Naive thymus-derived CD4-positive, alpha-beta T cell (primary cell): ENCODE measurements at regions of chr7 and their contacts with region 1.

Region 1: GRCh38 chr7:25389489-25390106 is 161.3 kb upstream of the NPVF start:
- DNase-seq: peak in 7 of 9 donors; percentile 32 to 67 (median 51)
- ATAC-seq: peak; percentile 61
- H3K4me3 ChIP-seq: no peak overlapping the region
- H3K4me3 Mint-ChIP-seq: no peak overlapping the region
- H3K27ac ChIP-seq: no peak overlapping the region
- H3K27ac Mint-ChIP-seq: peak overlapping the region in 2 of 9 donors; percentile 41 to 75
- H3K4me1 ChIP-seq: no peaks in the 10 kb centered on the region
- H3K4me1 Mint-ChIP-seq: peaks cover 0 to 9% (median 0%) of the 10 kb centered on the region in 7 donors
- H3K27me3 ChIP-seq: no peaks in the 10 kb centered on the region
- H3K27me3 Mint-ChIP-seq: peaks cover 0 to 22% (median 6%) of the 10 kb centered on the region in 5 donors

Region 2: DNA sequence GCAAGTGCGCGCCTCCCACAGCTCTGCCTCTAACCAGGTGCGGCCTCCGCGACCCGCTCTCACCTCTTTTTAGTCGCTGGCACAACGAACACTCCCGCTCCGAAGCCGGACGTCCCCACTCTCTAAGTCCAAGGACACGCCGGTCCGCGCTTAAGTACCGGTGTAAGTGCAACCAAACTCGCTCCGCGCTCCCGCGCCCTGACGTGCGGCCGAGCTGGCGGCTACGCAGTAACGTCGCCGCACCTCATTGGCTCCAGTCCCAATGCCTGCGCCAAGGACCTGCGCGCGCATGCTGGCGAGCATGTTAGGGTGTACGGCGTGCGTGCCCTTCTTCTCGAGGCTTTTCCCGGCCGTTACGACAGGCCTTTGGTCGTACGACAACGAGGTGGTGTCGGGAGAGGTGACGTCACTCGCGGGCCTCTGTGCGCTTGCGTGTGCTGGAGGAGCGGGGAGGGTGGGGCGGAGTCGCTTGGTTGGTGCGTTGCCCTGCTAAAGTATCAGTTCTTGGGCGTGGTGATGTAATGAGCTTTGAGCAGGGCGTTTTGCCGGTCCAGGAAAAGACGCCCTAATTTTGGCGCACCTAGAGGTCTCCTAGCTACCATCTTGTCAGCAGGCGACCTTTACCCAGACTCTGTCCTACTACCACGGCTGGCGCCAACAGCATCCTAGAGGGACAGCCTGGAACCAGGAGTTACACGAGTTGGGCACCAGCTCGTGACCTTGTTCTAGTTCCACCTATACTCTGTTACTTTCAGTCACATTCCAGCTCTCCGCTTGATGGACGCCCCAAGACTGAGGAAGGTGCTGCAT is 264.3 kb before region 1 on chr7 and contains the start of gene CYCS:
- CTCF ChIA-PET with region 1: no interaction called
- POLR2A ChIA-PET with region 1: no interaction called
- intact Hi-C with region 1: no loop called
- DNase-seq: peak; percentile 97 to 100 (median 99)
- ATAC-seq: peak; percentile 96
- H3K4me3 ChIP-seq: peak within 1 kb of the TSS; percentile 74
- H3K4me3 Mint-ChIP-seq: peak within 1 kb of the TSS; percentile 88 to 100 (median 100)
- H3K27ac ChIP-seq: peak within 1 kb of the TSS; percentile 93
- H3K27ac Mint-ChIP-seq: peak within 1 kb of the TSS; percentile 98 to 100 (median 100)
- H3K4me1 ChIP-seq: peaks cover 7 to 13% of the 10 kb centered on the region in 2 donors
- H3K4me1 Mint-ChIP-seq: peaks cover 15 to 40% (median 23%) of the 10 kb centered on the region in 7 donors
- H3K27me3 ChIP-seq: no peaks in the 10 kb centered on the region
- H3K27me3 Mint-ChIP-seq: peaks cover 0 to 5% (median 0%) of the 10 kb centered on the region in 5 donors
- total RNA-seq, gene CYCS: 40.4 to 130 (median 114) TPM

Region 3: GRCh38 chr7:25179771-25180591 is 209.6 kb before region 1 on chr7:
- CTCF ChIA-PET with region 1: no interaction called
- POLR2A ChIA-PET with region 1: no interaction called
- intact Hi-C with region 1: loop called in 1 of 2 experiments (anchors 2 kb)
- DNase-seq: peak; percentile 88 to 99 (median 94)
- ATAC-seq: peak; percentile 99
- H3K4me3 ChIP-seq: peak overlapping the region; percentile 75
- H3K4me3 Mint-ChIP-seq: peak overlapping the region; percentile 82 to 93 (median 88)
- H3K27ac ChIP-seq: peak overlapping the region; percentile 86
- H3K27ac Mint-ChIP-seq: peak overlapping the region; percentile 83 to 96 (median 92)
- H3K4me1 ChIP-seq: peaks cover 6 to 7% of the 10 kb centered on the region in 2 donors
- H3K4me1 Mint-ChIP-seq: peaks cover 13 to 31% (median 22%) of the 10 kb centered on the region in 7 donors
- H3K27me3 ChIP-seq: no peaks in the 10 kb centered on the region
- H3K27me3 Mint-ChIP-seq: peaks cover 0 to 12% (median 0%) of the 10 kb centered on the region in 5 donors

Region 4: GRCh38 chr7:25216837-25217236 is 172.8 kb before region 1 on chr7:
- CTCF ChIA-PET with region 1: no interaction called
- POLR2A ChIA-PET with region 1: no interaction called
- intact Hi-C with region 1: loop called in 1 of 2 experiments (anchors 1 kb)
- DNase-seq: peak in 6 of 9 donors; percentile 2 to 40 (median 34)
- ATAC-seq: peak; percentile 54
- H3K4me3 ChIP-seq: no peak overlapping the region
- H3K4me3 Mint-ChIP-seq: no peak overlapping the region
- H3K27ac ChIP-seq: no peak overlapping the region
- H3K27ac Mint-ChIP-seq: no peak overlapping the region
- H3K4me1 ChIP-seq: no peaks in the 10 kb centered on the region
- H3K4me1 Mint-ChIP-seq: no peaks in the 10 kb centered on the region
- H3K27me3 ChIP-seq: no peaks in the 10 kb centered on the region
- H3K27me3 Mint-ChIP-seq: peaks cover 7 to 31% (median 16%) of the 10 kb centered on the region in 5 donors

Region 5: GRCh38 chr7:25259587-25260243 is 129.9 kb before region 1 on chr7:
- CTCF ChIA-PET with region 1: interaction called, 78 read pairs
- POLR2A ChIA-PET with region 1: no interaction called
- intact Hi-C with region 1: loop called (anchors 1 kb)
- DNase-seq: peak; percentile 23 to 82 (median 74)
- ATAC-seq: peak; percentile 86
- H3K4me3 ChIP-seq: no peak overlapping the region
- H3K4me3 Mint-ChIP-seq: peak overlapping the region in 8 of 10 donors; percentile 51 to 75 (median 68)
- H3K27ac ChIP-seq: no peak overlapping the region
- H3K27ac Mint-ChIP-seq: peak overlapping the region in 7 of 9 donors; percentile 56 to 91 (median 81)
- H3K4me1 ChIP-seq: peaks cover 0 to 23% of the 10 kb centered on the region in 2 donors
- H3K4me1 Mint-ChIP-seq: peaks cover 15 to 37% (median 33%) of the 10 kb centered on the region in 7 donors
- H3K27me3 ChIP-seq: no peaks in the 10 kb centered on the region
- H3K27me3 Mint-ChIP-seq: peaks cover 0 to 14% (median 7%) of the 10 kb centered on the region in 5 donors

Region 6: DNA sequence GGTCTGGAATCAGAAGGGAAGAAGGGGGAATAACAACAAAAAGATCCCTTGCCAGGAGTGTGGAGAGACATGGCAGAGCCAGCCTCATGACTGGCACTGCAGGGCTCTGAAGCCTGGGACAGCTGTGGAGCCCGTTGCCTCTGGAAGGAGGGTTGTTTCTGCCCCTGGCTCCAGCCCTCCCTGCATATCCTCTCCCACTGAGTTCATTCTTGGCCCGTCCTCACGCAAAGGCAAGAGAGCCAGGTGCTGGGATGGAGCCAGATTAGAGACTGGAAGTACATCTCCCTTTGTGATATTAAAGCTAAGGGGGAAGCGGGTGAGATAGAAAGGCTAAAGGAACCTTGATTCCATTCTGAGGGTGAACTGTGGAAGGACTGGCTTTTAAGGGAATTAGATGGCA is 19.8 kb before region 1 on chr7:
- CTCF ChIA-PET with region 1: no interaction called
- POLR2A ChIA-PET with region 1: no interaction called
- intact Hi-C with region 1: no loop called
- DNase-seq: no peak
- ATAC-seq: no peak
- H3K4me3 ChIP-seq: no peak overlapping the region
- H3K4me3 Mint-ChIP-seq: no peak overlapping the region
- H3K27ac ChIP-seq: no peak overlapping the region
- H3K27ac Mint-ChIP-seq: no peak overlapping the region
- H3K4me1 ChIP-seq: no peaks in the 10 kb centered on the region
- H3K4me1 Mint-ChIP-seq: no peaks in the 10 kb centered on the region
- H3K27me3 ChIP-seq: no peaks in the 10 kb centered on the region
- H3K27me3 Mint-ChIP-seq: peaks cover 4 to 28% (median 17%) of the 10 kb centered on the region in 5 donors

Region 7: GRCh38 chr7:25559581-25560367 is 170.2 kb after region 1 on chr7:
- CTCF ChIA-PET with region 1: interaction called, 158 read pairs
- POLR2A ChIA-PET with region 1: interaction called, 3 read pairs
- intact Hi-C with region 1: no loop called
- DNase-seq: no peak
- ATAC-seq: no peak
- H3K4me3 ChIP-seq: no peak overlapping the region
- H3K4me3 Mint-ChIP-seq: no peak overlapping the region
- H3K27ac ChIP-seq: no peak overlapping the region
- H3K27ac Mint-ChIP-seq: no peak overlapping the region
- H3K4me1 ChIP-seq: peaks cover 0 to 7% of the 10 kb centered on the region in 2 donors
- H3K4me1 Mint-ChIP-seq: peaks cover 3 to 17% (median 13%) of the 10 kb centered on the region in 7 donors
- H3K27me3 ChIP-seq: no peaks in the 10 kb centered on the region
- H3K27me3 Mint-ChIP-seq: peaks cover 0 to 11% (median 0%) of the 10 kb centered on the region in 5 donors

Region 8: GRCh38 chr7:25565949-25566348 is 176.4 kb after region 1 on chr7:
- CTCF ChIA-PET with region 1: interaction called, 158 read pairs
- POLR2A ChIA-PET with region 1: interaction called, 3 read pairs
- intact Hi-C with region 1: loop called (anchors 1 kb)
- DNase-seq: peak; percentile 37 to 77 (median 66)
- ATAC-seq: peak; percentile 85
- H3K4me3 ChIP-seq: no peak overlapping the region
- H3K4me3 Mint-ChIP-seq: peak overlapping the region in 4 of 10 donors; percentile 4 to 67 (median 45)
- H3K27ac ChIP-seq: no peak overlapping the region
- H3K27ac Mint-ChIP-seq: peak overlapping the region in 2 of 9 donors; percentile 8 to 25
- H3K4me1 ChIP-seq: no peaks in the 10 kb centered on the region
- H3K4me1 Mint-ChIP-seq: peaks cover 0 to 7% (median 7%) of the 10 kb centered on the region in 7 donors
- H3K27me3 ChIP-seq: no peaks in the 10 kb centered on the region
- H3K27me3 Mint-ChIP-seq: peaks cover 0 to 7% (median 0%) of the 10 kb centered on the region in 5 donors

Region 9: DNA sequence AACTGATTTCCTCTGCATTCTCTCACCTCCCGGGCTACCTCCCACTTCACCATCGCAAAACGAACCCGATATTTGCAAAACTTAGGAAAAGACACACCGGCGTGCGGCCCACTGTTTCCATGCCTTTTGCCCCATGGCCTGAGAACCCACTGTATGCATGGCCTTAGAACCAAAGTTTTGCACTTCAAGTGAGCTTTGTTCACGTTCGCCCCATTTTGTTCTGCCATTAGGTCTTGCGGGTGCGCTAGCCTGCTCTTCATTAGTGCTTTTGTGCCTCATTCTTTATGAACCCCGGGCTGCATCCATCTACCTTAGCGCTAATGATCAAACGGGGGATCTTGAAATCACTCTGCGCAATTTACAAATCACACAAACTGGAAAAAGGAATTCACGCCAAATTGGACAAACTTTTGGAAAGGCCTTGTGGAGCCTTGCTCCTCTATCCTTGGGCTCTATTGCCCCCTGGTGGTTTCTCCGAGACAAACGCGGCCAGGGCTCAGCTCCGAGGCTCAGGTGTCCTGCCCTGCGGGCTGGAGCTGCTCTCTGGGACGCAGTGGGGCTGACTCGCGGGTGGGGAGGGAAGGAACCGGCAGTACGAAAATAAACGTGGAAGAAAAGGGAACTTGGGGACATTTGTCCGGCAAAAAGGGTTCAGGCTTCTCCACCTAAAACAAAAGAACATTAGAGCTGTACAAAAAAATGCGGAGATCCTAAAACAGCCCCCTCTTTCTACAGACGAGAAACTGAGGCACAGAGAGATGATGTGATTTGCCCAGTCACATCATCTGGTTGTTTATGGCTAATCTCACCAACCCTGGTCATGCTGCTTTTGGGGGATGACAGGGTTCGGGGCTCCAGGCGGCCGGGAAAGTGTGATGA is 462.0 kb after region 1 on chr7:
- CTCF ChIA-PET with region 1: interaction called, 6 read pairs
- POLR2A ChIA-PET with region 1: no interaction called
- intact Hi-C with region 1: loop called in 1 of 2 experiments (anchors 5 kb)
- DNase-seq: peak in 8 of 9 donors; percentile 43 to 69 (median 62)
- ATAC-seq: peak; percentile 84
- H3K4me3 ChIP-seq: no peak overlapping the region
- H3K4me3 Mint-ChIP-seq: peak overlapping the region; percentile 16 to 85 (median 76)
- H3K27ac ChIP-seq: no peak overlapping the region
- H3K27ac Mint-ChIP-seq: peak overlapping the region in 7 of 9 donors; percentile 5 to 79 (median 74)
- H3K4me1 ChIP-seq: peaks cover 3 to 9% of the 10 kb centered on the region in 2 donors
- H3K4me1 Mint-ChIP-seq: peaks cover 4 to 27% (median 19%) of the 10 kb centered on the region in 7 donors
- H3K27me3 ChIP-seq: peaks cover 29 to 50% of the 10 kb centered on the region in 2 donors
- H3K27me3 Mint-ChIP-seq: peaks cover 43 to 63% (median 59%) of the 10 kb centered on the region in 5 donors